ENCODE measurements at regions of chr5 and their contacts with region 1.

Region 1: GRCh38 chr5:148290271-148291195 is 21.7 kb upstream of the SPINK7 start:
- DNase-seq: peak; percentile 32
- H3K4me3 ChIP-seq: no peak overlapping the region
- H3K27ac ChIP-seq: no peak overlapping the region
- H3K4me1 ChIP-seq: no peaks in the 10 kb centered on the region
- H3K27me3 ChIP-seq: peaks cover 2% of the 10 kb centered on the region
- CTCF ChIP-seq: peak; percentile 64 to 67

Region 2: DNA sequence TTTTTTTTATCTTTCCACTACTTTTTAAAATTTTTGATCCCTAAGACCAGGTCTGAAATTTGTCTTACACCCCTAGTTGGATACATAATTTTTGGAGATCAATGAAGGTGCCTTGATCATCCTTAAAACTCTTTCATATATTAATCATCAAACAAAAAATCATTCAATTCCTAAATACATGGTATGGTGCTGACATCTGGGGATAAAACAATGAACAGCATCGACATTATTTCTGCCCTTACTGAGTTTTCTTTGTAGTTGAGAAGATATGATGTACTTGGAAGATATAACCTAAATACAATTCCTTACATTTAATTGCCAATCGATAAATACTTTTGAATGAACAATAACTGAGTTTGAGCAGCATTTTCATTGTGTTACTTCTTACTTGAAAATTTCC is 63.1 kb after region 1 on chr5:
- CTCF ChIA-PET with region 1: no interaction called
- dilution Hi-C with region 1: no loop called
- in situ Hi-C with region 1: no loop called
- intact Hi-C with region 1: loop called (anchors 1 kb)
- DNase-seq: no peak
- H3K4me3 ChIP-seq: no peak overlapping the region
- H3K27ac ChIP-seq: no peak overlapping the region
- H3K4me1 ChIP-seq: no peaks in the 10 kb centered on the region
- H3K27me3 ChIP-seq: no peaks in the 10 kb centered on the region
- CTCF ChIP-seq: peak in 1 of 2 donors; percentile 34

Region 3: DNA sequence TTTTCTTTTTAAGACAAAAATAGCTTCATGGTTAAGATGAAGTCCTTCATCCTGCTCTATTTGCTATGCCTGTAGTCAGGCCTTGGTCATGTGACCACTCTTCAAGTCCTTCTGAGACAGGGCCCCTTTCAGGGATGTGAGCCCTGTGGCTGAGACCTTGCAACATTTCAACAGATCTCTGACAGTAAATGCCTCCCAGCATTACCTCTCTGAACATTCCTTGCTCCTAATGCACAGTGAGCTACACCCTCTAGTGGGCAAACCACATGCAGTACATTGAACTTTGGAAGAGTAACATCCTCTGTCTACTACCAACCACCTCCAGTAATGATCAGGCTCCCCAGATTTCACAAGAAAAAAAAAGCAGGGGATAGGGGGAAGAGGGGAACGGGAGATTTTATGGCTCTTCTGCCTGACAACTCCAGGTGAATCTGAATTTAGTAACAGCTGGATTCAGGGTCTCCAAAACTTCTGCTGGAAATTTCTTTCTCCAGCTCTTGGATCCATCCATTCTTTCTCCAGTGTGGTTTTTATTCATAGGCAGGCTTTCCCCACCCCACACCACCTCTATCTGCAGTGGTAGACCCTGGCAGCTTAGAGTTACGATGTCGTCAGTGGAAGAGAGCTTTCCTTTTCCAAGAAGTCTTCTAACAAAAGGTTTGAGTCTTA is 84.3 kb after region 1 on chr5:
- CTCF ChIA-PET with region 1: no interaction called
- dilution Hi-C with region 1: no loop called
- in situ Hi-C with region 1: no loop called
- intact Hi-C with region 1: loop called (anchors 1 kb)
- DNase-seq: peak; percentile 67
- H3K4me3 ChIP-seq: no peak overlapping the region
- H3K27ac ChIP-seq: no peak overlapping the region
- H3K4me1 ChIP-seq: peaks cover 4% of the 10 kb centered on the region
- H3K27me3 ChIP-seq: no peaks in the 10 kb centered on the region
- CTCF ChIP-seq: peak; percentile 95 to 97